OCI-LY7 (cell line): ENCODE measurements at regions of chr3 and their contacts with region 1.

Region 1: DNA sequence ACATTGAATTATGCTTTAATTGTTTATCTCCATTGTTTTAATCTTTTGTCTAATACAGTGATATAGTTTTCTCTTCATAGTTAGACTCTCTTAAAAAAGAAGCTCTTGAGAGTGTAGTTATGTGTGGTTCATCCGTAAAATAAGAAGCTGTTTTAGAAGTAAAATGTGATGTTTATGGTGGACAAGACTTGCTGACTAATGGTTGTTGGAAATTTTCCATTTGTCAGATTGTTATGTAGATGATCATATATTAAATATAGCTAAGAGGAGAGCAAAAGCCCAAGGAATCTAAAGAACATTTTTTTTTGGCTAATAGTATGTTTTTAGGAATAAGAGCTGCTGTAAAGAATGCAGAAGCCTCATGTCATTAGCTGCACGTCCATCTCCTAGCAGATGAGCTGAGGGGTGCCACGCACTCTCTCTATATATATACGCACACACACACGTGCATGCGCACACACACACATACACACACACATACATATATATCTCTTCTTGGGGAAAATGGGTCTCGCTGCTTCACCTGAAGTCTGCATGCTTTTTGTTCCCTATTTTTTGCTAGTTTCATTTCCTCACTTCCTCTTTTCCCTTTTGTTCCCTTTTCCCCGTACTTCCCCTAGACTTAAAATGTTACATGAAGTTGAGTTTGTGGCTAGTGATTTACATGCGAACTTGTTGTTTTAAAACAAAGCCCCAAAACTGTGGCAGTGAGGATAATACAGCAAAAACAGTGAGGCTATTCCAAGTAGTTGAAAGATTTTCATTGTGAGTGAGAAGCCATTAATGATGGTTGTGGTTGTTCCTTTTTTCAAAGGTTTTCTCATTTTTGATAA is 107.8 kb downstream of the MBNL1 start:
- DNase-seq: peak; percentile 95
- H3K4me3 ChIP-seq: peak overlapping the region; percentile 55
- H3K27ac ChIP-seq: peak overlapping the region; percentile 92
- H3K4me1 ChIP-seq: peaks cover 77% of the 10 kb centered on the region
- CTCF ChIP-seq: no peak

Region 2: DNA sequence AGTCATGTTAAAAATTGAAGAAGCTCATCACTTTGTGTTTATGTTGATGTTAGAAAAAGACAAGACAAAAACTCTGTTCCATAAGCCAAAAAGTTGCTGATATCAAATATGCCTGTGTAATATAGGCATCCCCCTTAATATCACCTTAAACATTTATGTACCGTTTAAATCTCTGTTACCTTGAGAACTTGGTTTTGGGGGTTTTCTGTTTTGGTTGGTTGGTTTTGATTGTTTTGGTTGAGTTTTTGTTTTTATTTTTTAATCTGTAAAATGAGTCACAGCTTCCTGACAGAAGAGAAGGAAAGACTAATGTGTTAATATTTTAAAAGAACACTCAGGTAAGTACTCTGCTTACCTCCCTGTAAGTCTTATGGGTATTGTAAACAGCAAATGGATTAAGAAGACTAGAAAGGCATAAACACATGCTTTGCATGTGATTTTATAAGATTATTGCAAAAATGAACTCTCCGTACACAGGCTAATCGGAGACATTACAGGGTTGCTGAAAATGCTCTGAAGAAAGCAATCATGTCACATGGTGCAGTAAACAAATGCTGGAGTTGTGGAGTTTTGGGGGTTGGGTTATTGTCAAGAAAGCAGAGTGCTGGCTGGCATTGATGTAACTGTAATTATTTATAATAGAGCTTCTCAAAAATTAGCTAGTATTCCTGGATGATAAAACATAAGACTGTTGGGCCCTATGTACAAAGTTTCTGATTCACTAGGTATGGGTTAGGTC is 177.3 kb before region 1 on chr3:
- CTCF ChIA-PET with region 1: no interaction called
- POLR2A ChIA-PET with region 1: interaction called, 4 read pairs
- intact Hi-C with region 1: loop called (anchors 2 kb)
- DNase-seq: peak; percentile 45
- H3K4me3 ChIP-seq: peak overlapping the region; percentile 49
- H3K27ac ChIP-seq: peak overlapping the region; percentile 63
- H3K4me1 ChIP-seq: peaks cover 85% of the 10 kb centered on the region
- CTCF ChIP-seq: no peak

Region 3: DNA sequence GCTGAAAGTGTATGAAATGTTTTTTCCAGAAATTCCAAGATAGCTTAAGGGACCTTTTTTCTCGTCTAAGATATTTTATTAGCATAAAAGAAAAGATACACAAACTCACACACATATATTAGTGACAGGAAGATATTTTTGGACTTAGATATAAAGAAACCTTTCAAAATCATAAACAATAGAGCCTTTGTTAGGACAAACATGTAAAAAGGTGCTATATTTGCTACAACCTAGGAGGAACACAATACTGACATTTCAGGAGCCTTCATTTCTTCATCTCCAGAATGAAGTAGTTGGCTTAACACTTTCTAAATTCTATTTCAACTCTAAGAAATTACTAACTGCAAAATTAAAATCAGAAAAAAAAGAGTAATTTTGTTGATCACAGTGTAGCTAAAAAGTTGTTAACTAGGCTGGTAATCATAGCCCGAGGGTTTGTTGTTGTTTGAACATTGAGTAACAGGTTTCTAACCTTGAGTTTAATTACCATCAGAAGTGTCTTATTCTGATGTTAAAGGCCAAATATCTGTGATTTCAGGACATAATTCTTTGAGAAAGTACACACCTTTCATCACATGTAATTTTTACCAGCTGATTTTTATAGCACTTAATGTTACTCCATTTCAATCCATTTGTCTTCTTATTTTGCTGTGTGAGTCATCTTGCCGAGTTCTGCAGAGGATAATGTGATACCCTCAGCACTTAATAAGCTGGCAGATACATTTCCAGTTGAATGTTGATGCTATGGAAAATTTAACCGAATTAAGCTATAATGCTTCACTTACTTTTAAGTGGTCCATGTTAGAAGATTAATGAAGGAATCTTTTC is 10.6 kb before region 1 on chr3:
- CTCF ChIA-PET with region 1: interaction called, 3 read pairs
- POLR2A ChIA-PET with region 1: interaction called, 11 read pairs
- intact Hi-C with region 1: no loop called
- DNase-seq: no peak
- H3K4me3 ChIP-seq: no peak overlapping the region
- H3K27ac ChIP-seq: no peak overlapping the region
- H3K4me1 ChIP-seq: peaks cover 10% of the 10 kb centered on the region
- CTCF ChIP-seq: no peak

Region 4: GRCh38 chr3:152389316-152389934 is 12.9 kb after region 1 on chr3:
- CTCF ChIA-PET with region 1: no interaction called
- POLR2A ChIA-PET with region 1: interaction called, 20 read pairs
- intact Hi-C with region 1: no loop called
- DNase-seq: no peak
- H3K4me3 ChIP-seq: no peak overlapping the region
- H3K27ac ChIP-seq: no peak overlapping the region
- H3K4me1 ChIP-seq: peaks cover 4% of the 10 kb centered on the region
- CTCF ChIP-seq: no peak

Region 5: DNA sequence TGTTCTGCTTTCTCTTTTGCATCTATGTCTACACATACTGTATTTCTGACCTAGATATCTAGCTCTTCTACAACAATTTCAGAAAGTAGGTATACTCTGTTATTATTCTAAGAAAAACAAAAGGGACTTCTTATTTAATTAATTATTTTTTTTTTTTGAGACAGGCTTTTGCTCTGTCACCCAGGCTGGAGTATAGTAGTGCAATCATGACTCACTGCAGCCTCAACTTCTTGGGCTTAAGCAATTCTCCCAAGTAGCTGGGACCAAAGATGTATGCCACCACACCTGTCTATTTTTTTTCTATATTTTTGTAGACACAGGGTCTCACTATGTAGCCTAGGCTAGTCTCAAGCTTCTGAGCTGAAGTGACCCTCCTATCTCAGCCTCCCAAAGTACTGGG is 22.8 kb after region 1 on chr3:
- CTCF ChIA-PET with region 1: no interaction called
- POLR2A ChIA-PET with region 1: interaction called, 11 read pairs
- intact Hi-C with region 1: no loop called
- DNase-seq: no peak
- H3K4me3 ChIP-seq: no peak overlapping the region
- H3K27ac ChIP-seq: no peak overlapping the region
- H3K4me1 ChIP-seq: peaks cover 18% of the 10 kb centered on the region
- CTCF ChIP-seq: no peak